Pancreas (tissue), 10 donors: ENCODE measurements at regions of chr16 and their contacts with region 1.

Region 1: GRCh38 chr16:27109666-27110523 is 43.2 kb downstream of the C16orf82 start:
- DNase-seq: peak; percentile 32 to 92 (median 66)
- ATAC-seq: peak; percentile 72 to 98 (median 92)
- H3K4me3 ChIP-seq: peak overlapping the region in 2 of 4 donors; percentile 20 to 26
- H3K27ac ChIP-seq: no peak overlapping the region
- H3K4me1 ChIP-seq: no peaks in the 10 kb centered on the region
- H3K27me3 ChIP-seq: no peaks in the 10 kb centered on the region
- CTCF ChIP-seq: peak; percentile 82 to 97 (median 92)

Region 2: DNA sequence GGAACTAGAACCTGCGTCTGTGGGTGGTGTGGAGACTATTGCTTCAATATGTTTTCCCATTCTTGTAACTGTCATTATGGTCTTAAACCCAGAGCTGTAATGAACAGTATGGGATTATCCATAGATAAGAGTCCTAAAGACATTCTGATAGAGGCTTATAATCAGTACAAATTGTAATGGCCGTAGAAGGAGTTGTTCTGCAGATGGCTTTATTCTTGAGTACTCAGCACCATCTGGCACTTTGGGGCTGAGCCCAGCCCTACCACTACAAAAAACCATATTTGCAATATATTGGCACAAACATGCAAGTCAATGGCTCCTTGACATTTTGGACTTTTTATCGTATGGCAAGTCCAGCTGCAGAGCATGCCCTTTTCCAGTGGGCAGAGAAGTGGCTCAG is 1268.1 kb before region 1 on chr16:
- intact Hi-C with region 1: loop called in 1 of 3 experiments (anchors 10 kb)
- DNase-seq: no peak
- ATAC-seq: no peak
- H3K4me3 ChIP-seq: no peak overlapping the region
- H3K27ac ChIP-seq: no peak overlapping the region
- H3K4me1 ChIP-seq: no peaks in the 10 kb centered on the region
- H3K27me3 ChIP-seq: peaks cover 0 to 7% (median 0%) of the 10 kb centered on the region in 4 donors
- CTCF ChIP-seq: no peak

Region 3: GRCh38 chr16:27097800-27098230 is 12.1 kb before region 1 on chr16:
- intact Hi-C with region 1: no loop called
- DNase-seq: peak in 1 of 6 donors; percentile 22
- ATAC-seq: peak in 3 of 4 donors; percentile 39 to 59 (median 49)
- H3K4me3 ChIP-seq: no peak overlapping the region
- H3K27ac ChIP-seq: no peak overlapping the region
- H3K4me1 ChIP-seq: no peaks in the 10 kb centered on the region
- H3K27me3 ChIP-seq: no peaks in the 10 kb centered on the region
- CTCF ChIP-seq: no peak